Natural killer cell (primary cell): ENCODE measurements at regions of chr1 and their contacts with region 1.

Region 1: GRCh38 chr1:95072532-95073419 is at the start of gene ALG14:
- DNase-seq: peak; percentile 88 to 98
- ATAC-seq: peak; percentile 91 to 94 (median 92)
- H3K4me3 ChIP-seq: peak within 1 kb of the TSS; percentile 96
- H3K4me3 Mint-ChIP-seq: peak within 1 kb of the TSS; percentile 100
- H3K27ac ChIP-seq: peak within 1 kb of the TSS; percentile 77
- H3K27ac Mint-ChIP-seq: peak within 1 kb of the TSS; percentile 96 to 98
- H3K4me1 ChIP-seq: peaks cover 10% of the 10 kb centered on the region
- H3K4me1 Mint-ChIP-seq: peaks cover 14 to 18% of the 10 kb centered on the region in 2 donors
- H3K27me3 ChIP-seq: no peaks in the 10 kb centered on the region
- H3K27me3 Mint-ChIP-seq: no peaks in the 10 kb centered on the region
- CTCF ChIP-seq: no peak
- total RNA-seq, gene ALG14: 0.48 to 2.3 (median 1.1) TPM

Region 2: GRCh38 chr1:94417978-94418663 is 654.7 kb before region 1 on chr1 and contains the start of gene ABCD3:
- intact Hi-C with region 1: loop called (anchors 1 kb)
- DNase-seq: peak; percentile 97 to 99
- ATAC-seq: peak; percentile 92 to 98 (median 94)
- H3K4me3 ChIP-seq: peak within 1 kb of the TSS; percentile 94
- H3K4me3 Mint-ChIP-seq: no peak within 1 kb of the TSS
- H3K27ac ChIP-seq: peak within 1 kb of the TSS; percentile 80
- H3K27ac Mint-ChIP-seq: no peak within 1 kb of the TSS
- H3K4me1 ChIP-seq: peaks cover 9% of the 10 kb centered on the region
- H3K4me1 Mint-ChIP-seq: peaks cover 26 to 40% of the 10 kb centered on the region in 2 donors
- H3K27me3 ChIP-seq: no peaks in the 10 kb centered on the region
- H3K27me3 Mint-ChIP-seq: peaks cover 8 to 11% of the 10 kb centered on the region in 2 donors
- CTCF ChIP-seq: no peak
- total RNA-seq, gene ABCD3: 22.3 to 29.5 (median 27.6) TPM

Region 3: DNA sequence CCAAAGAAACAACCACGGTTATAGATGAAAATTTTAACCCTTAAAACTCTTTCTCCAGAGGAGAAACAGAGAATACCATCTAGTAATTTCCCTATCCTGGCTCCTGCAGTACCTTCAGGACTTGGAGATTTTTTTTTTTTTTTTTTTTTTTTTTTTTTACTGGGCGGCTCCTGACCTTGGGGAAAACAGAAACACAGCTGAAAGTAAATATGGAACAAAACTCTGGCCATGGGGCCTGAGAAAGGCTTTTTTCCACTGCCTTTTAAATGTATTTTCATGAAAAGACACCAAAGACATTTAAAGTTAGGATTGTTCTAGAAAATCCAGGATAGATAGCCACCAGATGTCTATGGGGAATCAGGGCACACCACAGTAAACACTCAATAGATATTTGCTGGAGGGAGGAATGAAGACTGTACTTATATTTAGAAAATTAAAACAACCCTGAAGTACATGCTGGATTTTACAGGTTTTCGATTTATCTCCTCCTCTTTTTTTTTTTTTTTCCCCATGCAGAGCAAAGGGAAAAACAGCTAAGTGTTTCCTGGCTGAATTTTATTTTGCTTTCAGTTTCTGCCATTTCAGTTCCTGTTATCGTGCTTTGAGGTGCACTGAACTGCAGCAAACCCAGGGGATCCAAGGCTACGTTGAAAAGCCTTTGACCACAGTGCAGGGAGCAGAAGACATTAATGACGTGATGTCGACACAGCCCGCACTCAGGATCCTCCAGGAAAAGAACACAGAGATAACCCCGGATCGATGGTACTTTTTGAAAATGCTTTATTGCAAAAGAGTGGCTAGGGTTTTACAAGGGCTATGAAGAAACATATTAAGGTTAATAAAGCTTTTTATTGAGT is 110.1 kb before region 1 on chr1:
- intact Hi-C with region 1: loop called (anchors 10 kb)
- DNase-seq: peak in 1 of 2 donors; percentile 61
- ATAC-seq: peak; percentile 50 to 75 (median 71)
- H3K4me3 ChIP-seq: peak overlapping the region; percentile 39
- H3K4me3 Mint-ChIP-seq: peak overlapping the region; percentile 95
- H3K27ac ChIP-seq: peak overlapping the region; percentile 69
- H3K27ac Mint-ChIP-seq: peak overlapping the region; percentile 83 to 94
- H3K4me1 ChIP-seq: peaks cover 11% of the 10 kb centered on the region
- H3K4me1 Mint-ChIP-seq: peaks cover 9% of the 10 kb centered on the region in 2 donors
- H3K27me3 ChIP-seq: no peaks in the 10 kb centered on the region
- H3K27me3 Mint-ChIP-seq: no peaks in the 10 kb centered on the region
- CTCF ChIP-seq: no peak

Region 4: GRCh38 chr1:95233737-95234500 is 161.1 kb after region 1 on chr1 and contains the start of gene RWDD3:
- intact Hi-C with region 1: loop called (anchors 2 kb)
- DNase-seq: peak; percentile 92 to 95
- ATAC-seq: peak; percentile 94 to 98 (median 94)
- H3K4me3 ChIP-seq: peak within 1 kb of the TSS; percentile 90
- H3K4me3 Mint-ChIP-seq: peak within 1 kb of the TSS; percentile 91
- H3K27ac ChIP-seq: peak within 1 kb of the TSS; percentile 74
- H3K27ac Mint-ChIP-seq: peak within 1 kb of the TSS; percentile 76 to 83
- H3K4me1 ChIP-seq: peaks cover 13% of the 10 kb centered on the region
- H3K4me1 Mint-ChIP-seq: peaks cover 19 to 31% of the 10 kb centered on the region in 2 donors
- H3K27me3 ChIP-seq: peaks cover 11% of the 10 kb centered on the region
- H3K27me3 Mint-ChIP-seq: peaks cover 19 to 24% of the 10 kb centered on the region in 2 donors
- CTCF ChIP-seq: peak; percentile 75
- total RNA-seq, gene RWDD3: 8.8 to 15.3 (median 15.2) TPM